Natural killer cell (primary cell): ENCODE measurements at regions of chr6 and their contacts with region 1.

Region 1: DNA sequence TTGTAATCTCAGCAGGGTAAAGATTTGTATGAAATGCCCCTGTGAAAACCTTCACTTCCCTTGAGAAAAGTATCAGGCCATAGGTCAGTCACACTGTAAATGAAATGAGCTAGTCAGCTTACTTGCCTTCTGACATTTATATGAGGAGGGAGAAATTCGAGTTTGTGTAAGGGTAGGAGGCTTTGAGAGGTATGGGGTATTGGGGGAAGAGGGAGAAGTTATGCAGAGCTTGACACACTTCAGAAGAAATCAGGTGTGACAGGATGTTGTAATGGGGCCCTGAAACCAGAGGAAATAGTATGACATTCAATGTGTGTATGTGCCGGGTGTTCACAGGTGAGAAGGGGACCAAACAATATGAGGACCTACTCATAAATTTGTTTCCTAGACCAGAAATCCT is 64.2 kb upstream of the CCN6 start:
- DNase-seq: peak in 1 of 2 donors; percentile 76
- ATAC-seq: peak; percentile 56 to 65 (median 60)
- H3K4me3 ChIP-seq: no peak overlapping the region
- H3K4me3 Mint-ChIP-seq: peak overlapping the region; percentile 67
- H3K27ac ChIP-seq: peak overlapping the region; percentile 59
- H3K27ac Mint-ChIP-seq: peak overlapping the region; percentile 85 to 88
- H3K4me1 ChIP-seq: peaks cover 43% of the 10 kb centered on the region
- H3K4me1 Mint-ChIP-seq: peaks cover 64 to 66% of the 10 kb centered on the region in 2 donors
- H3K27me3 ChIP-seq: no peaks in the 10 kb centered on the region
- H3K27me3 Mint-ChIP-seq: no peaks in the 10 kb centered on the region
- CTCF ChIP-seq: no peak

Region 2: GRCh38 chr6:111973118-111973761 is 16.5 kb before region 1 on chr6:
- intact Hi-C with region 1: loop called (anchors 2 kb)
- DNase-seq: peak; percentile 26 to 86
- ATAC-seq: peak; percentile 74 to 84 (median 83)
- H3K4me3 ChIP-seq: no peak overlapping the region
- H3K4me3 Mint-ChIP-seq: peak overlapping the region; percentile 4
- H3K27ac ChIP-seq: peak overlapping the region; percentile 67
- H3K27ac Mint-ChIP-seq: peak overlapping the region; percentile 75 to 85
- H3K4me1 ChIP-seq: peaks cover 9% of the 10 kb centered on the region
- H3K4me1 Mint-ChIP-seq: peaks cover 15% of the 10 kb centered on the region in 2 donors
- H3K27me3 ChIP-seq: no peaks in the 10 kb centered on the region
- H3K27me3 Mint-ChIP-seq: peaks cover 0 to 11% of the 10 kb centered on the region in 2 donors
- CTCF ChIP-seq: no peak

Region 3: DNA sequence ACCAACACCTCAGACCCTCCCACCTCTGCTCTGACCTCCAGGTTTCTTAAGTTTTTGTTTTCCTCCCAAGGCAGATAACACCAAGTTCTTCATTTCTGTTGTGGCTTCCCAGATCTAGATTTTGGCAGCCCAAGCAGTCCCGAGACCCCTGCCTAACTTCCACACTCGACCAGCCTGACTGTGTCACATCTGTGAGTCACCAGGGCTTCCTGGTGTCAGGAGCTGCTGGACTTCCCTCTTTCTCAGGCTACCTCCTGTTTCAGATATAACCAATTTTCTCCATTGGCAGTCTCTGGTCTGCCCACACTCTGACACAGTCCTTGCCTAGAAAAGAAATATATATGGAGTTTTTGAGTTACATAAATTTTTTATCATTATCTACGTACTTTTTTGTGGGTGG is 18.1 kb after region 1 on chr6:
- intact Hi-C with region 1: no loop called
- DNase-seq: no peak
- ATAC-seq: peak in 1 of 3 donors; percentile 20
- H3K4me3 ChIP-seq: no peak overlapping the region
- H3K4me3 Mint-ChIP-seq: no peak overlapping the region
- H3K27ac ChIP-seq: no peak overlapping the region
- H3K27ac Mint-ChIP-seq: no peak overlapping the region
- H3K4me1 ChIP-seq: peaks cover 5% of the 10 kb centered on the region
- H3K4me1 Mint-ChIP-seq: peaks cover 0 to 8% of the 10 kb centered on the region in 2 donors
- H3K27me3 ChIP-seq: no peaks in the 10 kb centered on the region
- H3K27me3 Mint-ChIP-seq: no peaks in the 10 kb centered on the region
- CTCF ChIP-seq: no peak

Region 4: GRCh38 chr6:112144145-112144926 is 154.6 kb after region 1 on chr6:
- intact Hi-C with region 1: no loop called
- DNase-seq: no peak
- ATAC-seq: no peak
- H3K4me3 ChIP-seq: no peak overlapping the region
- H3K4me3 Mint-ChIP-seq: no peak overlapping the region
- H3K27ac ChIP-seq: no peak overlapping the region
- H3K27ac Mint-ChIP-seq: no peak overlapping the region
- H3K4me1 ChIP-seq: no peaks in the 10 kb centered on the region
- H3K4me1 Mint-ChIP-seq: no peaks in the 10 kb centered on the region
- H3K27me3 ChIP-seq: no peaks in the 10 kb centered on the region
- H3K27me3 Mint-ChIP-seq: peaks cover 16 to 35% of the 10 kb centered on the region in 2 donors
- CTCF ChIP-seq: no peak